Colonic mucosa (tissue), 4 donors: ENCODE measurements at regions of chr14 and their contacts with region 1.

Region 1: DNA sequence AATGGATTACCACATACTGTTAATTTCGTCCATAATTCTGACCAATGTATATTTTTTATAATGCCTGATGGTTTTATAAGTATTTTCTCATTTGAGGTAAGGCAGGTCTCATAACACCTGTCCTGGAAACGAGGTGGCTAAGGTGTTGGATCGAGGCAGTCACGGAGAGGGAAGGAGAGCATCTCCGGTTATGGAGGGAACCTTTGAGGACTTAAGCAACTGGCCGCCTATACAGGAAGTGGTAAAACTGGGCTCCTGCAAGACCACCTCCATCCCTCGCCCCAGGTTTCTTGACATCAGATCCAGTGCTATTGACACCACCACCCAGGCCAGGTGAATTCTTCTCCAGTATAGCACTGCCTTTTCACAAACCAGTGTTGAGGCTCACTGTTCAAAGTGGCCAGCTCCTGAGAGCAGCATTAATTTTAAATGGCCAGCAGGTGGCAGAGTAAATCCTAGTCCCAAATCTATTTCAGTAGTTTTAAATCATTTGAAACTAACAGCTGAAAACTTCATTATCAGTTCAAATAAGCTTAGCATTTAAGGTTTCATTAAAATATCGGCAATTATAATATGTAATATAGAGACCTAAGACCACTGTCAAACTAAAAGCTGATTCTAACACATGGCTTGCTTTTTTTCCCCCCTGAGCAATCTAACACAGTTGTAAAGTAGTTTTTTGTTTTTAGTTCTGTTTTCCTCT is 100.8 kb downstream of the PPM1A start:
- DNase-seq: peak; percentile 24
- H3K4me3 ChIP-seq: no peak overlapping the region
- H3K27ac ChIP-seq: no peak overlapping the region
- H3K4me1 ChIP-seq: no peaks in the 10 kb centered on the region
- H3K27me3 ChIP-seq: no peaks in the 10 kb centered on the region
- CTCF ChIP-seq: peak; percentile 49

Region 2: DNA sequence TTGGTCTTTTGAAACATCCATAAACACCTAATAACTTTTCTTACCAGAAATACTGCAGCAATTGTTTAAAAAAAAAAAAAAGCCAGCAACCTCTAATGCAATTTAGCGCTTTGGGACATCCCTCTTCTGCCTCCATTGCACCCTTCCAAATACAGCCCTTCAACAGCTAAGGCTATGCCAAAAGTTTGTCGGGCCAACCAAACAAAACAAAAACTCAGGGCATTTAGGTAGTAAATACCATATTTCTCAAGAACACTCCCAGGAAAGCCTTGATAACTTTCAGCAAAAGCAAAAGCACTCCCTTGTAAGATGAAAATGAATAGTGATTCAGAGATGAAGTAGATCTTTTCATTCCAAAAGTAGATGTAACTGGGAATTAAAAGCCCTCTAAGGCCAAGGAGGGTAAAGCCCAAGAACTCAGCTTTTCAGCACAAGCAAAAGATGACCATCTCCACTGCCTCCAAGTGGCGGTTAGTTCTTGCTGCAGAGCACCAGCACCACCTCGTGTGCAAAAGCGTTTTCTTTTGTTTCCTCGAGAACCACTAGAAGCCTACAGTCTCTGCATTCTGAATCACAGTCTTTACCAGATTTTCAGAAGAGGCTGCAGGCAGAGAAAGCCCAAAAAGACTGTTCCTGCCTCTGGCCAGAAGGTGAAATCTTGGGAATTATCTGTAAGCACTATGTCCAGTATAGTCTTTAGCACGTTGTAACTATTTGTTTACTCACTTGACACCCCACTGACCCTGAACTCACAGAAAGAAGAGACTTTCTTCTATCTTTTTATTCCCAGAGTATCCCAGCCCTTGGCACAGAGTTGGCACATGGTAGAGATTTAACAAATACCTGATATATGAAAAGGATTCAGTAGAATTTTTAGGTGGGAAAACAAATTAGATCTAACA is 212.3 kb after region 1 on chr14:
- intact Hi-C with region 1: loop called (anchors 5 kb)
- DNase-seq: peak; percentile 20
- H3K4me3 ChIP-seq: no peak overlapping the region
- H3K27ac ChIP-seq: no peak overlapping the region
- H3K4me1 ChIP-seq: no peaks in the 10 kb centered on the region
- H3K27me3 ChIP-seq: no peaks in the 10 kb centered on the region
- CTCF ChIP-seq: peak; percentile 26

Region 3: DNA sequence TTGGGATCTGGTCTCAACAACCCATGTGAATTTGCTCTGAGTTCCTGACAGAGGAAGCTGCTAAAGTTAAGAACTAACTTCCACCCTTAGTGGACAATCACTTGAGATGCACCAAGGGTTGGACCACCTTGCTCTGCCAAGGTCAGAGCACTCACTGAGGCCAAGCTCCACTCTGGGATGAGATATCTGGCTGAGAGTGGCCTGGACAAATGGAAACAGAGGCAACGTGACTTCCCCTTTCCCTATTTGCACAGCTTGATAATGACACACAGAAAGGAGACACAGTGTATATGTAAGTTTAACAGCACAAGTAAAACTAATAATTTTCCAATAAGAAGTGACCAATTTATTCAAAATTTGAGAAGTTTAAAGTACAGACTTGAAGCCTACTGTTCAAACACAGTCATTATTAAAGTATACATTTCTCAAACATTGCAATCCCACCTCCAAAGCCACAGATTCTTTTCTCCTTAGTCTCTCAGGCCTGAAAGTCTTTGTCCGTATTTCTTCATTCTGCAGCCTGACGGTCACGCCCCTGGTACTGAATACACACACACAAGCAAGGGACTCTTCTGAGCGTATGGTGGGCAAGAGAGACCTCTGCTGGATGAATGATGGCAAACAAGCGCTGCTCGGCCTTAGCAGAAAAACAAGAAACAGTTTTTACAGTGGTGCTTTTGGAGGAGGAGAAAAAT is 902.7 kb after region 1 on chr14:
- intact Hi-C with region 1: loop called (anchors 5 kb)
- DNase-seq: peak; percentile 66
- H3K4me3 ChIP-seq: no peak overlapping the region
- H3K27ac ChIP-seq: no peak overlapping the region
- H3K4me1 ChIP-seq: no peaks in the 10 kb centered on the region
- H3K27me3 ChIP-seq: no peaks in the 10 kb centered on the region
- CTCF ChIP-seq: peak; percentile 71